ENCODE measurements at regions of chr18 and their contacts with region 1.

Region 1: GRCh38 chr18:59402432-59403090 is 43.5 kb upstream of the LMAN1 start:
- DNase-seq: peak; percentile 65
- ATAC-seq: peak; percentile 83

Region 2: GRCh38 chr18:59079264-59079972 is 323.1 kb before region 1 on chr18:
- intact Hi-C with region 1: loop called (anchors 5 kb)
- DNase-seq: no peak
- ATAC-seq: no peak

Region 3: GRCh38 chr18:59249205-59249774 is 153.3 kb before region 1 on chr18:
- intact Hi-C with region 1: loop called (anchors 5 kb)
- DNase-seq: no peak
- ATAC-seq: peak; percentile 39

Region 4: DNA sequence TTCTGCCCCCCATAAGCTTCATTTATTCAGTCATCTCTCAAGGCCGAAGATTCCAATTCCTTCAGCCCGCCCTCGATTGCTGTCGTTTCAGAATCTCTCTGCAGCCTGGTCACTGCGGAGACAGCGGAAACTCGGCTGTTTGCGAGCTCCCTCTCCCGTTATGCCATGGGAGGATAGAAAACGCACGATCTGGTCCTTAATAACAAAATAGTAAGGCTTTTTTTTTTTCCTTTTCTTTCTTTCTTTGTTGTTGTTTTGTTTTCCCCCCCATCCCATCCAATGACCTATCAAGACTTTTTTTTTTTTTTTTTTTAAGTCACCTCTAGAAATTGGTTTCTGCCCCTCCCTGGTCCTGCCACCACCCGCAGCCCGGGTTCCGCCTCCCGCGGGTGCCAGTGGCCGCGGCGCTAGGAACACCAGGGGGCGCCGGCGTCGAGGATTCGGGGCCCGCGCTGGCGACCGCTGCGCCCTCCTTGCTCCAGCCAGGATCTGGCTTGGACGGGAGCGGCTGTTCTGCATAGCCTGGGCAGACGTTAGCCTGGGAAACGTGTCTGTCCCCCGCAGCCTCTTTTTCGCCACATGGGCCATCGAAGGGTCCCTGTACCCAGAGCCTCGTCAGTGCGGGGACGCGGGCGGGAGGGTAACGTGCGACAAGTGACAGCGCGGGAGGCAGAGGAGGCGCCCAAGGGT is 94.2 kb before region 1 on chr18:
- intact Hi-C with region 1: loop called (anchors 5 kb)
- DNase-seq: peak; percentile 82
- ATAC-seq: peak; percentile 97

Region 5: GRCh38 chr18:59715966-59716369 is 313.4 kb after region 1 on chr18:
- intact Hi-C with region 1: no loop called
- DNase-seq: no peak
- ATAC-seq: no peak